Activated naive CD4-positive, alpha-beta T cell treated with anti-CD3 and anti-CD28 coated beads for 36 hours (primary cell): ENCODE measurements at regions of chr1 and their contacts with region 1.

Region 1: DNA sequence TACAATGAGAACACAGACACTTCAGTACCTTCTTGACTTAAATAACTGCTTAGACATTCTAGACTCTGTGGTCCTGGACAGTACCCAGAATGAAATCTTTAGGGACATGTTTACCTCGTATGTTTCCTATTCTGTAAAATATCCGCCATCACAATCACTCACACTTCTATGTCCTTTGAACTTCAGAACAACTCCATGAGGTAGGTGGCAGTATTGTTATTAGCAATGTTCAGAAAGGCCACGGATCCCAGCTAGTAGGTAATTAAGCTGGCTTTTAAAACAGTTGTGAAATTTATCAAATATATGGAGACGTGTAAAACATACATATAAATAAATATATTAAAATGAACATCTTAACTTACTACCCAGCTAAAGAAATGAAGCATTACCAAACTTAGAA is 83.4 kb downstream of the CACHD1 start:
- DNase-seq: no peak
- H3K4me3 Mint-ChIP-seq: no peak overlapping the region
- H3K27ac Mint-ChIP-seq: no peak overlapping the region
- H3K4me1 Mint-ChIP-seq: peaks cover 41% of the 10 kb centered on the region
- H3K27me3 Mint-ChIP-seq: no peaks in the 10 kb centered on the region

Region 2: DNA sequence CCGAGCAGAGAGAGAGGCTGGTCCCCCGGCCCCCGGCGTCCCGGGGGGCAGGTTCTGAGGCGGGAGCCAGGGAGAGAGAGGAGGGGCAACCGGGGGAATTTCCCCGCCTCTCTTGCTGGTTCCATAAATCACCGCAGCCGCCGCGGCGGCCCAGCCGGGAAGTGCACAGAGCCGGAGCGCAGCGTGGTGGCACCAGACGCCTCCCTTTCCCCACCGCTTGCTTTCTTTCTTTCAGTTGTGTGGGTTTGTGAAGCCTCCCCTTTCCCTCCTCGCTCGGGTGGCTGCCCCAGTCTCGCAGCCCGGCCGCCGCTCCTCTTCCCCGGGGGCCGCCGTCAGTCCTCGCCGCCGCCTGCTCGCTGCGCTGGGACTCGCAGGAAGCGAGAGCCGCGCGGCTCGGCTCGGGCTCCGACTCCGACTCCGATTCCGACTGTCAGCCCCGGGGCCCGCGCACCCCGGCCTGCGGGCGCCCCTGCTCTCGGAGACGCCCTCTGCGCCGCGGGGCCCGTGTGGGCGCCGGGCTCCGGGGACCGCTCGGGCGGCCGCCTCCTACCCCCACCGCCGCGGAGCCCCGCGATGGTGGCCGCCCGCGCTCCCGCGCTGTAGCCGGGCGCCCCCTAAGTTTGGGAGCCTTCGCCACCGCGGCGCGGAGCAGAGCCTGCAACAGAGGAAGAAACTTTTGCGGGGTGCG is 83.2 kb before region 1 on chr1 and contains the start of gene CACHD1:
- CTCF ChIA-PET with region 1: no interaction called
- intact Hi-C with region 1: loop called (anchors 1 kb)
- DNase-seq: peak; percentile 86
- H3K4me3 Mint-ChIP-seq: peak within 1 kb of the TSS; percentile 78
- H3K27ac Mint-ChIP-seq: peak within 1 kb of the TSS; percentile 3
- H3K4me1 Mint-ChIP-seq: peaks cover 14% of the 10 kb centered on the region
- H3K27me3 Mint-ChIP-seq: peaks cover 27% of the 10 kb centered on the region
- total RNA-seq, gene CACHD1: 2.6 to 2.9 TPM

Region 3: DNA sequence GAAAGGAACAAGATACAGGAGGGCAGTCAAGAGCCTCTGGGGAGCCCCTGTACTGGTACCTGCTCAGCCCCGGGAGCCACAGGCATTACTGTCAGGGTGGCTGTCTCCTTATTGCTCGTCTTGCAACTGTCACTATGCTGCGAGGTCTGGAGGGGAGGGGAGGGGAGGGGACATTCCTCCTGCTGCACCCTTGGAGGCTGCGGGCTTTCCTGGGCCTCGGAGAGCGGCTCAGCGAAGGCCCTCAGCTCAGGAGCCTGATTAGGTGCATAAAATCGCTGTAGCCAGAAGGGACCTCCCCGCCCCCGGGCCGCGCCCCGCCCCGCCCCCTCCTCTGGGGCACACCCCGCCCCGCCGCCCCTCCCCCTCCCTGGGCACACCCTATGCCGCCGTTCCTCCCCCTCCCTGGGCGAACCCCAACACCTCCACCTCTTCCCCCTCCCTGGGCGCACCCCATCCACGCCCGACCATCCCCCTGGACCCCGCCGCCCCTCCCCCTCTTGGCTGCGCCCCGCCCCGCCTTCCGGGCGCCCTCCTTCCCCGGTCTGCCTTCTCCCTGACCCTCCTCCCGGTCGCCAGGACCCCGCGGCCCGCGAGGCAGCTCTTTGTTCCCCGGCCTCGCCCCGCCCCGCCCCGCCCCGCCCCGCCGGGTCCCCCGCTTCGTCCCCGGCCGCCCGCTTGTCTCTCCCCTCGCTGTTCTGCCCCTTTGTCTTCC is 47.9 kb before region 1 on chr1:
- CTCF ChIA-PET with region 1: no interaction called
- intact Hi-C with region 1: loop called (anchors 1 kb)
- DNase-seq: peak; percentile 77
- H3K4me3 Mint-ChIP-seq: peak overlapping the region; percentile 88
- H3K27ac Mint-ChIP-seq: peak overlapping the region; percentile 77
- H3K4me1 Mint-ChIP-seq: peaks cover 29% of the 10 kb centered on the region
- H3K27me3 Mint-ChIP-seq: no peaks in the 10 kb centered on the region

Region 4: DNA sequence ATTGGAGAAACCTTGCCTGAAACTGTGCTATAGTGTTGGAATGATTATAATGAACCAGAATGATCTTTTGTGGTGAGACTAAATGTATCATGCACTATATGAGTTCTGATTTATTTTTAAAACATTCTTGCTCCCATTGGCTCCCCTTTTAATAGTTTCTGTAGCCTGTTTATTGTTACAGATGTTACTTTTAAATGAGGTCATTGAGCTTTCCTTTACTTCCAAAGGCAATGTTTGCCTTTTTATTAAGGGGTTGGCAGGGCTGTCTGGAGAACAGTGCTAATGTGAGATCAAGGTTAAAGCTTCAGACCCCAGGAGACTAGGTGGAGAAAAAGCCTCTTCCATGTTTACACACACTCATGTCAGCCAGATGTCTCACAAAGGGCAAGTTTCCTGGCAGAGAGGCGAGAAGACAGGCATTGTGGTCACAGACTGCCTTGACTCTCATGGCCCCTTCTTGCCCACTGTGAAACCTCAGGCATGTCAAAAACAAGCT is 71.0 kb after region 1 on chr1:
- CTCF ChIA-PET with region 1: no interaction called
- intact Hi-C with region 1: loop called (anchors 1 kb)
- DNase-seq: peak; percentile 23
- H3K4me3 Mint-ChIP-seq: no peak overlapping the region
- H3K27ac Mint-ChIP-seq: no peak overlapping the region
- H3K4me1 Mint-ChIP-seq: peaks cover 6% of the 10 kb centered on the region
- H3K27me3 Mint-ChIP-seq: no peaks in the 10 kb centered on the region

Region 5: DNA sequence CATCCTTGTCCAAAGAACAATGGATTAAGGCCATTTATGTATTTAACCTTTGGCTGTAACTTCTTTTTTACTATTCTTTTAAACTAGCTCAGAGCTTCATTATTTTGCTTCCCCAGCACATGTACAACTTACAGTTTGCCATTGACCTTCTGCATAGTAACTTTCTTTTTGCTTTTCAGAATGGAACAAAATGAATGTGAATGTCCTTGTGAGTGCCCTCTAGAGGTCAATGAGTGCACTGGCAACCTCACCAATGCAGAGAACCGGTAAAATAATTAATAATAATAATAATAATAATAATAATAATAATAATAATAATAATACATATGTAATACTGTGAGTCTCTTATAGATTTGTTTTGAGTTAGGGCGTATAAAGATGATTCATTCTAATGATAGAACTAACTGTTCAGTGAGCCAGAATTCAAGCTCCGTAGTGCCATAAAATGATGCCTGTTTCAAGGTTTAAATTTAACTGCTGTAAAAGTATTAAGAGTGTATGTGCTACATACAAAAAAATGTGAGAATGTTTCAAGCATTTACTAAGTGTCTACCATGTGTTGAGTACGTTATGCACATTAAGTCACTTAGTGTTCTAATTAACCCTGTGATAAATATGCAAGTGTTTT is 122.6 kb after region 1 on chr1:
- CTCF ChIA-PET with region 1: interaction called, 3 read pairs
- intact Hi-C with region 1: loop called (anchors 2 kb)
- DNase-seq: no peak
- H3K4me3 Mint-ChIP-seq: no peak overlapping the region
- H3K27ac Mint-ChIP-seq: no peak overlapping the region
- H3K4me1 Mint-ChIP-seq: no peaks in the 10 kb centered on the region
- H3K27me3 Mint-ChIP-seq: no peaks in the 10 kb centered on the region

Region 6: DNA sequence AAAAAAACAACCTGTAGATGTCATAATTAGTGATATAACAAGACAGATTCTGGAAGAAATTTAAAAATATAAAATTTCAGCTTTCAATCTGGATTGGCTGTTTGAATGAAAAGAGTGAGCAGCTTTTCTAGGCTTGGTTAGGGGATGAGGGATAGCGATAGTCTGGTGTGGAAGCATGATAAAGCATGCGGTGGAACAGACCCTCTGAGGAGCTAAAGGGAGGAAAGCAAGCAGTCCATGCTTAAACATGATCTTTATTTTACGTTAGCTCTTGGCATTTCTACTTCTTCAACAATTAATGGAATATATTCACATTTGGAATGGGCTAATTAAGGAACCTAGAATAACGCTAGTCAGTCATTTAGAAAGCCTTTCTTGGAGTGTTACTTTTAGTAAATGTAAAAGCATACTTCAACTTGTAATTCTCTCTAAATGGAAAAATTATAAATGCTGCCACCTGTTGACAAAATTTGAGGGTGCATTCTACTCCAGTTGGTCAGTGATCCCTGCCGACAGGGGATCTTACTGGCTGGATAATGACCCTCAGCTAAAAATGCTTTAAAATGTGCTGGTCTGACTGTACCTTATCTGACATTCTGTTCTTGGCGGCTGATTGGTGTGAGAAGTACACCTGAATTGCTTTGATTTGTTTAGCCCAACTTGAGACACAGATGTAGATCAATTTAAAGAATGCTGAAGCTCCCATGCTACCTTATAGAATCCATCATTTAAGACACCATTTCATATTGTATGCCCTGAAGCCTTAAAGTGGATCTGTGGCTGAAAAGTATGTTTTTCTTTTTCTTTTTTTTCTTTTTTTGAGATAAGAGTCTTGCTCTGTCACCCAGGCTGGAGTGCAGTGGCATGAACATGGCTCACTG is 656.0 kb after region 1 on chr1:
- CTCF ChIA-PET with region 1: no interaction called
- intact Hi-C with region 1: loop called (anchors 10 kb)
- DNase-seq: peak; percentile 28
- H3K4me3 Mint-ChIP-seq: no peak overlapping the region
- H3K27ac Mint-ChIP-seq: no peak overlapping the region
- H3K4me1 Mint-ChIP-seq: peaks cover 23% of the 10 kb centered on the region
- H3K27me3 Mint-ChIP-seq: peaks cover 3% of the 10 kb centered on the region